Upper lobe of right lung (tissue), 1 donor: ENCODE measurements at regions of chr12 and their contacts with region 1.

Region 1: GRCh38 chr12:109393437-109394345 is 46.0 kb downstream of the MYO1H start:
- DNase-seq: no peak
- ATAC-seq: peak; percentile 94
- H3K4me3 ChIP-seq: no peak overlapping the region
- H3K27ac ChIP-seq: no peak overlapping the region
- H3K4me1 ChIP-seq: no peaks in the 10 kb centered on the region
- H3K27me3 ChIP-seq: peaks cover 16% of the 10 kb centered on the region
- CTCF ChIP-seq: peak; percentile 90

Region 2: GRCh38 chr12:109264095-109264942 is 129.4 kb before region 1 on chr12:
- intact Hi-C with region 1: loop called (anchors 10 kb)
- DNase-seq: peak; percentile 80
- ATAC-seq: peak; percentile 83
- H3K4me3 ChIP-seq: no peak overlapping the region
- H3K27ac ChIP-seq: no peak overlapping the region
- H3K4me1 ChIP-seq: no peaks in the 10 kb centered on the region
- H3K27me3 ChIP-seq: no peaks in the 10 kb centered on the region
- CTCF ChIP-seq: peak; percentile 64

Region 3: GRCh38 chr12:109488051-109488665 is 94.5 kb after region 1 on chr12:
- intact Hi-C with region 1: no loop called
- DNase-seq: no peak
- ATAC-seq: no peak
- H3K4me3 ChIP-seq: no peak overlapping the region
- H3K27ac ChIP-seq: no peak overlapping the region
- H3K4me1 ChIP-seq: no peaks in the 10 kb centered on the region
- H3K27me3 ChIP-seq: no peaks in the 10 kb centered on the region
- CTCF ChIP-seq: no peak